Heart right ventricle (tissue), 16 donors: ENCODE measurements at regions of chr1 and their contacts with region 1.

Region 1: GRCh38 chr1:60746278-60746791 is 336.0 kb upstream of the NFIA start:
- DNase-seq: peak; percentile 34 to 51
- ATAC-seq: peak in 7 of 8 donors; percentile 33 to 94 (median 91)
- H3K4me3 ChIP-seq: no peak overlapping the region
- H3K27ac ChIP-seq: peak overlapping the region in 8 of 10 donors; percentile 28 to 66 (median 60)
- H3K4me1 ChIP-seq: peaks cover 0 to 19% (median 2%) of the 10 kb centered on the region in 9 donors
- H3K27me3 ChIP-seq: no peaks in the 10 kb centered on the region
- CTCF ChIP-seq: no peak

Region 2: DNA sequence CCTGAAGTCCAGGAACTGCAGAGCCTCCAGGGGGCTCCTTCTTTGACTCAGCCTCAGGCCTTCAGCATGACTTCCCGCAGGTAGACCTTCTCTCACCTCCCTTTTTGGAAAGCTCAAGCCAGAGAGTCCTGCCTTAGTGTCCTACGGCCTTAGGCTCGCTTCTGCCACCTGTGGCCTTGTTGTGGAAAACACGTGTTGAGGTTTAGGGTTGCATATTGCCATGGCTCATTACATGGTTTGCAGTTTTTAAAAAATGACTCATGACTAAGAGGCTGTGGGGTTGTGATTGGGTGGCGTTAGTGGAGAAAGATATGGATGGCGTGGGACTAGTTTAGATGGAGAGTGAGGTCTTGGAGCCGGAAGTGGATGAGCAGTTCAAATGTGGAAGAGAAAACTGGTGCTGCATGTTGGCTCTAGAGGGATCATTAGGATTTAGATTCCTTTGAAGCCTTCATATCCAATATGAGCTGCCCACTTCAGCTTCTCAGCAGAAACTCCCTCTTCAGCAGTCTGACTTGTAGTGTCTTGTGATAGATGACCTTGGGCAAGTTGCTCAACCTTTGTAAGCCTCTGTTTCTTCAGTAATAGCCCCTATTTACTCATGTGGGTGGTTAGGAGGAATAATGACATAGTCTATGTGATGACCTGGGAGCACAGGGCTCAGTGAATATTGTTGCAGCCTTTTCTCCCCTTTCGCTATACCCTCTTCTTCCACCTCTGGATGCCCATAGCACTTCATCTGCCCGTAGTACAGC is 1456.0 kb before region 1 on chr1:
- intact Hi-C with region 1: loop called in 1 of 10 experiments (anchors 5 kb)
- DNase-seq: peak in 1 of 2 donors; percentile 15
- ATAC-seq: peak in 7 of 8 donors; percentile 18 to 74 (median 50)
- H3K4me3 ChIP-seq: no peak overlapping the region
- H3K27ac ChIP-seq: peak overlapping the region in 1 of 10 donors; percentile 91
- H3K4me1 ChIP-seq: peaks cover 0 to 43% (median 5%) of the 10 kb centered on the region in 9 donors
- H3K27me3 ChIP-seq: no peaks in the 10 kb centered on the region
- CTCF ChIP-seq: peak in 7 of 9 donors; percentile 38 to 65 (median 54)

Region 3: DNA sequence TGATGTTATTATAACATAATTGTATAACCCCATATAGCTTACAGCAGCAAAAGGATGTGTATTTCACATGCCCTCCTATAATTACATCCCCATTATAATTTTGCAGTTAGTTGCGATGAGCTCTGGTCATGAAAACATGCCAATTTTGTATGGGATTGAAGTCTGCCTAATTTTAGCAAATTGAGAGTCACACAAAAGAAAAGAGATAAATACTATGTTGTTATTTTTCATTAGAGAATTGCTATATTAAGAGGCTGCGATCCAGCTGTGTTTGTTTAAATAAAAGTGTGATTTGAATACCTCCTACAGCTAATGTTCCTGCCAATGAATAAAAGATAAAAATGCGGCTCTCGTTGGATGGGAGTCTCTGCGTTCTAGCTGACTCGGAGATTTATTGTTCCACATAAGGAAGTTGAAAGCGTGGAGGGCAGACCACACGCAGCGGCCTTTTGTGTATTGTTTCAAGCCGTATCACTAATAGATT is 124.9 kb before region 1 on chr1:
- intact Hi-C with region 1: loop called in 1 of 10 experiments (anchors 10 kb)
- DNase-seq: peak in 1 of 2 donors; percentile 11
- ATAC-seq: peak in 5 of 8 donors; percentile 48 to 63 (median 54)
- H3K4me3 ChIP-seq: no peak overlapping the region
- H3K27ac ChIP-seq: no peak overlapping the region
- H3K4me1 ChIP-seq: peaks cover 0 to 30% (median 14%) of the 10 kb centered on the region in 9 donors
- H3K27me3 ChIP-seq: no peaks in the 10 kb centered on the region
- CTCF ChIP-seq: no peak

Region 4: DNA sequence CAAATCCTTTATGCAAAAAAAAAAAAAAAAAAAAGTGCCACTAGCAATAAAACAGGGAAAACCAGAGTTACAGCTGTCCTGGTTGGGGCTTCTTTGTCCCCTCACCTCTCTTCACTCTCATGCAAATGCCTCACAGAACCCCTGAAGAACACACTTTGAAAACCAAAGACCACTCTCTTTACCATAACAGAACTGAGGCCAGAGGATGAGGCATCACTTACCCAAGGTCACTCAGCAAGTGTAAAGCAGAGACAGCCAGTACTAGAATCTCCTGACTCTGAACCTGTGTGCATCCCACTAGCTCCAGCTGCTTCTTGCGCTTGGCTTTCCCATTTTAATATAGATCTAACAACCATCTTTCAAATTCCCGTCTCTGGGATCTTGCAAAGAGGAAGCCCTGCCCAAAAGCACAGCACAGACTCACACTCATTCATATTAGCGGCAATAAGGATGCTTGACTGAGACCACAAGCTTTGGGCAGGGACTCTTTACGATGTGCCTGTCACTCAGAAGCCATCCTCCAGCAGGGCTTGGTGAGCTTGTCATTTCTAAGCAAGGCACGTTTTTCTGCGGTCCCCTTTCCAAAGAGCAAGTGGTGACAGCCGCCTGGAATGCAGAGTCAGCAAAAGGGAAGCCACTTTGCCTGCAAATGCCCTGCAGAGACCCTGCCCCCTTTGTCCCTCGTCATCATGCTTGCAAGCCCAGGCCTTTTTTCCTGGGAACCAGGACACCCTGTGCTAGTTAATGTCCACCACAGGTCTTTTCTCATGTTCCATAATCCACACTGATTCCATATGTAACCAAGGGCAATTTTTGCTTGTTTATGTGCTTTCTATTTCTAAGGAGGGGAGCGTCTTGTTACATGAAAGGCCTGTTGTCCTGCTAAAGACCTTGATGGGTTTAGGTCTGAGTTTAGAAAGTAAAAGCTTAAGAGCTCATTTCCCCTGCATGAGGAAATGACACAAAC is 259.6 kb after region 1 on chr1:
- intact Hi-C with region 1: no loop called
- DNase-seq: no peak
- ATAC-seq: no peak
- H3K4me3 ChIP-seq: no peak overlapping the region
- H3K27ac ChIP-seq: no peak overlapping the region
- H3K4me1 ChIP-seq: peaks cover 0 to 7% (median 0%) of the 10 kb centered on the region in 9 donors
- H3K27me3 ChIP-seq: no peaks in the 10 kb centered on the region
- CTCF ChIP-seq: no peak